ENCODE measurements at regions of chr16 and their contacts with region 1.

Region 1: GRCh38 chr16:81006814-81007696 is at the starts of genes CENPN and CMC2:
- DNase-seq: peak; percentile 98
- ATAC-seq: peak; percentile 86
- H3K4me3 Mint-ChIP-seq: peak within 1 kb of the TSS; percentile 98
- H3K27ac Mint-ChIP-seq: peak within 1 kb of the TSS; percentile 100
- H3K4me1 Mint-ChIP-seq: peaks cover 48% of the 10 kb centered on the region
- H3K27me3 Mint-ChIP-seq: no peaks in the 10 kb centered on the region
- total RNA-seq, gene CENPN: 45.7 to 56.3 TPM
- total RNA-seq, gene CMC2: 100.0 to 114 TPM

Region 2: GRCh38 chr16:80580109-80580832 is 426.8 kb before region 1 on chr16:
- CTCF ChIA-PET with region 1: no interaction called
- POLR2A ChIA-PET with region 1: no interaction called
- intact Hi-C with region 1: loop called (anchors 2 to 10 kb)
- DNase-seq: peak; percentile 86
- ATAC-seq: peak; percentile 91
- H3K4me3 Mint-ChIP-seq: peak overlapping the region; percentile 60
- H3K27ac Mint-ChIP-seq: peak overlapping the region; percentile 99
- H3K4me1 Mint-ChIP-seq: peaks cover 50% of the 10 kb centered on the region
- H3K27me3 Mint-ChIP-seq: peaks cover 2% of the 10 kb centered on the region

Region 3: DNA sequence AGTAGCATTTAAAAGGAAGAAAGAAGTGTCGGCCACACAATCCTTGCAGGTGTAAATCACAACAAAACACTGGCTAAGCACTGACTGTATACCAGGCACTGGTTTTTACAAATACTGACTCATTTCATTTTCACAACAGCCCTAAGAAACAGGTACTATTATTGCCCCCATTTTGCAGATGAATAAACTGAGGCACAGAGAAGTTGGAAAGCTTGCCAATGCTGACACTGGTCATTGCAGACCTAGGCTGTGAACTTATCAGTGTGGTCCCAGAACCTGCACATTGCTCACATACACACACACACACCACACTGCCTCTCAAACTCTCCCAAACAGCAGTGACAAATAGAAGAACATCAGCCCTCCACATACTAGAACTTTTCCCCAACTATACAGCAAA is 240.3 kb before region 1 on chr16:
- CTCF ChIA-PET with region 1: no interaction called
- POLR2A ChIA-PET with region 1: no interaction called
- intact Hi-C with region 1: no loop called
- DNase-seq: no peak
- ATAC-seq: no peak
- H3K4me3 Mint-ChIP-seq: no peak overlapping the region
- H3K27ac Mint-ChIP-seq: no peak overlapping the region
- H3K4me1 Mint-ChIP-seq: peaks cover 11% of the 10 kb centered on the region
- H3K27me3 Mint-ChIP-seq: no peaks in the 10 kb centered on the region

Region 4: DNA sequence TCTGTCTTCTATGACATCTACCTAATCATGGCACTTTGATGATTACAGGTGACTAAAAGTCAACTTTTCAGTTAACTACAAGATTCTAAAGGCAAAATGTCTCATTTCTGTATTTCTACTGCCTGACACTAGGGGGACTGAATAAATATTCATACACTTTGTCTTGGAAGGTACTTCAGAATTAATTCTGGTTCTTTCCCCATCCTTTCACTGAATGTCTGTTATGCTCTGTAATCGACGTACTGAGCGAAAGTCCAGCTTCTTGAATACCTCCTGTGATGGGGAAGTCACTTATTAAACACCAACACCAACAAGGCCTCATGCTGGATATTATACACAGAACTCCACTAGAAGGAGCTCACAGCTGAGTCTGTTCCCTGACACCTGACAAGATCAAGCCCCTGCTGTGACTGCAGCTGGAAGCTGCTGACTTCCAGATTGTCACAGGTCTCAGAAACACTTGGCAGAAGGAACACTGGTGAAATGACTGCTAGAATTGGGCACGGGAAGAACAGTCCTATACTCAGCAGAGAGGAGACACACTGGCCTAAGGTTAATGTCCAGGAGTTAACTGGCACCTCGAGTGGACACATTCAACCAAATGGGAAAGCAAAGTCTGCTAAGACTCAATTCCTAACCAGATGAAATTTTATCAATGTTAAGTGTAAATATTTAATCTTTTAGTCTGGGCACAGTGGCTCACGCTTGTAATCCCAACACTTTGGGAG is 32.2 kb before region 1 on chr16:
- CTCF ChIA-PET with region 1: interaction called, 10 read pairs
- POLR2A ChIA-PET with region 1: interaction called, 3 read pairs
- intact Hi-C with region 1: no loop called
- DNase-seq: no peak
- ATAC-seq: peak; percentile 70
- H3K4me3 Mint-ChIP-seq: no peak overlapping the region
- H3K27ac Mint-ChIP-seq: no peak overlapping the region
- H3K4me1 Mint-ChIP-seq: peaks cover 10% of the 10 kb centered on the region
- H3K27me3 Mint-ChIP-seq: no peaks in the 10 kb centered on the region

Region 5: GRCh38 chr16:81077076-81077940 is 70.3 kb after region 1 on chr16 and contains the start of gene C16orf46:
- CTCF ChIA-PET with region 1: interaction called, 8 read pairs
- POLR2A ChIA-PET with region 1: no interaction called
- intact Hi-C with region 1: loop called (anchors 1 kb)
- DNase-seq: peak; percentile 99
- ATAC-seq: peak; percentile 86
- H3K4me3 Mint-ChIP-seq: no peak within 1 kb of the TSS
- H3K27ac Mint-ChIP-seq: peak within 1 kb of the TSS; percentile 84
- H3K4me1 Mint-ChIP-seq: peaks cover 7% of the 10 kb centered on the region
- H3K27me3 Mint-ChIP-seq: no peaks in the 10 kb centered on the region
- total RNA-seq, gene C16orf46: 0.28 to 0.34 TPM

Region 6: GRCh38 chr16:81335669-81336068 is 328.6 kb after region 1 on chr16:
- CTCF ChIA-PET with region 1: no interaction called
- POLR2A ChIA-PET with region 1: no interaction called
- intact Hi-C with region 1: loop called in 1 of 2 experiments (anchors 5 kb)
- DNase-seq: peak; percentile 79
- ATAC-seq: peak; percentile 98
- H3K4me3 Mint-ChIP-seq: no peak overlapping the region
- H3K27ac Mint-ChIP-seq: peak overlapping the region; percentile 57
- H3K4me1 Mint-ChIP-seq: peaks cover 27% of the 10 kb centered on the region
- H3K27me3 Mint-ChIP-seq: no peaks in the 10 kb centered on the region

Region 7: GRCh38 chr16:81737885-81738786 is 731.1 kb after region 1 on chr16:
- CTCF ChIA-PET with region 1: interaction called, 3 read pairs
- POLR2A ChIA-PET with region 1: no interaction called
- intact Hi-C with region 1: loop called in 1 of 2 experiments (anchors 1 kb)
- DNase-seq: peak; percentile 93
- ATAC-seq: peak; percentile 98
- H3K4me3 Mint-ChIP-seq: peak overlapping the region; percentile 55
- H3K27ac Mint-ChIP-seq: peak overlapping the region; percentile 51
- H3K4me1 Mint-ChIP-seq: no peaks in the 10 kb centered on the region
- H3K27me3 Mint-ChIP-seq: no peaks in the 10 kb centered on the region